BJ (cell line): ENCODE measurements at regions of chr4 and their contacts with region 1.

Region 1: DNA sequence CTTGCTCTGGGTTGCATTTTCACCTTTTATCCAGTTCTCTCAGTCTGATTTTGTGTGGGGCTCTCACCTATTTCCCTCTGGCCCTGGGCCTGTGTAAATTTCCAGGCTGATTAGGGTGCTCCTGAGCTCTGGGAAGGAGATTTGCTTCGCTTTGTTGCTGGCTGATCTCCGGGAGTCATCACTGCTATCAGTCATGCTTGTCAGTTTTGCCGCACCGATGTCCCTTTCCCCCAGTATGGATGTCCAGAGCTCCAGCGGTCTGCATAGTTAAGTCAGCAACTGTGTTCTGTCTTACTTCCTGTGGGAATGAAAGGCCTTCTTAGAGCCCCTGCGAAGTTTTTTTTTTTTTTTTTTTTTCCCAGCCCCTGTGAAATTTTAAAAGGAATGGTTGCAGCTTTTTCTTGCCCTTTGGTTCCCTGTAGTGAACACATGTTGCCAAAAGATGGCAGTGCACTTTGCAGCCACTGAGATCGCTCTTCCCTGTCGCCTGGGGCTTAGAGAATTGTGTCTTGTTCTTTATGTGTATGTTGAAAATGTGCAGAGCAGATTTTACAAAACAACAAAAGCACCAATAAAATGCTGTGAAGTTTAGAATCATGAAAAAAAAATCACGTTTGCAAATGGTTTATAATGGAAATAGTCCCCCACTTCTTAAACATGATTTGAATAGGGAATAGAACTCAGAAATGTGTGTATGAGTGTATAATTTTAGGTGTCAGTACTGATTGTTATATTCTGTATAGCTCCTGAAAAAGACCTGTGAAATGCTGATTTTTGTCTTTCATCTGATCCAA is 109.1 kb upstream of the SLC4A4 start:
- DNase-seq: no peak
- H3K4me3 ChIP-seq: no peak overlapping the region
- H3K27me3 ChIP-seq: no peaks in the 10 kb centered on the region
- CTCF ChIP-seq: peak; percentile 79

Region 2: DNA sequence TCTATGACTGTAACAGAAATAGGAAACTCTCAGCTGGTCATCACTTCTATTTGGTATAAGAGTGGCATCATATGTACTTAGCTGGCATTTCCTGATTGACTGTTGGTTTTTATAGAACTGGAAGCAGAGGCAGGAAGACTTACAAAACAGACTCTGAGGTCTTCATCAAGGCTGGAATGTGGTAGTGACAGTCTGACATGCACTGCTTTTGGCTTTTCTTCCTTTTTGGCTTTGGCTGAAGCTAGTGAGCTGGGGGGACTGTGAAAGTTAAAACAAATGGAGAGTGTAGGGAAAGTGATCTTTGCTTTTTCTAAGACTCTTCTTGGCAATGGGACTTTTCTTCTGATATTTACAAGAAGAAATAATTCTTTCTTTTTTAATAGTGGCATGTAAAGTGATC is 12.0 kb before region 1 on chr4:
- CTCF ChIA-PET with region 1: interaction called, 25 read pairs
- POLR2A ChIA-PET with region 1: interaction called, 3 read pairs
- DNase-seq: no peak
- H3K4me3 ChIP-seq: no peak overlapping the region
- H3K27me3 ChIP-seq: no peaks in the 10 kb centered on the region
- CTCF ChIP-seq: no peak

Region 3: GRCh38 chr4:71251261-71251660 is 21.6 kb after region 1 on chr4:
- CTCF ChIA-PET with region 1: interaction called, 14 read pairs
- POLR2A ChIA-PET with region 1: no interaction called
- DNase-seq: peak; percentile 78
- H3K4me3 ChIP-seq: no peak overlapping the region
- H3K27me3 ChIP-seq: no peaks in the 10 kb centered on the region
- CTCF ChIP-seq: no peak

Region 4: GRCh38 chr4:71553605-71554004 is 323.9 kb after region 1 on chr4:
- CTCF ChIA-PET with region 1: interaction called, 21 read pairs
- POLR2A ChIA-PET with region 1: no interaction called
- DNase-seq: no peak
- H3K4me3 ChIP-seq: no peak overlapping the region
- H3K27me3 ChIP-seq: no peaks in the 10 kb centered on the region
- CTCF ChIP-seq: peak; percentile 63

Region 5: DNA sequence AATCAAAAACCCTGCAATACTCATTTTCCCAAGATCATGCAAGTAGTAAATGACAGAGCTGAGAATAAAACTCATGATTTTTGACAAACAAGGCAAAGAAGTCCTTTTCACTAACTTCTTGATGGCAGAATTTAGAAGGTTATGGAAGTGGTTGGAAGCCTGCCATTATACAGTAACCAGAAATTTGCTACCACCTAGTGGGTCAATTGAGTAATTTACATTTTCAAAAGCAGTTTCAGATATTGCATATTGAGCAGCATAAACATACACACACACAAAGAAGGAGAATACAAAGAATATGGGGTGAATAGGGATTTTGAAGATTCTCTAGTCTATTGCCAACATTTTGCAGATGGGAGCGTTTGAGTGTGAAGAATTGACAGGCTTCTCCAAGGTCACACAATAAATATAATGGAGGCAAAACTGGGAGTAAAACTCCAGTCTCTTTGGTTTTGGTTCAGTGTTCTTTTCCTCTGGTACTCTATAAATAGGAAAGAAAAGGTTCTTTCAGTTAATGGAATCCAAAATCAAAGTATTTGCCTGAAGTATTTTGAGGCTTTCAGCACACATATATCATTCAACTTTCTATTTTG is 484.0 kb after region 1 on chr4:
- CTCF ChIA-PET with region 1: interaction called, 35 read pairs
- POLR2A ChIA-PET with region 1: no interaction called
- DNase-seq: no peak
- H3K4me3 ChIP-seq: no peak overlapping the region
- H3K27me3 ChIP-seq: no peaks in the 10 kb centered on the region
- CTCF ChIP-seq: peak; percentile 45